PC-3 (cell line): ENCODE measurements at regions of chr6 and their contacts with region 1.

Region 1: DNA sequence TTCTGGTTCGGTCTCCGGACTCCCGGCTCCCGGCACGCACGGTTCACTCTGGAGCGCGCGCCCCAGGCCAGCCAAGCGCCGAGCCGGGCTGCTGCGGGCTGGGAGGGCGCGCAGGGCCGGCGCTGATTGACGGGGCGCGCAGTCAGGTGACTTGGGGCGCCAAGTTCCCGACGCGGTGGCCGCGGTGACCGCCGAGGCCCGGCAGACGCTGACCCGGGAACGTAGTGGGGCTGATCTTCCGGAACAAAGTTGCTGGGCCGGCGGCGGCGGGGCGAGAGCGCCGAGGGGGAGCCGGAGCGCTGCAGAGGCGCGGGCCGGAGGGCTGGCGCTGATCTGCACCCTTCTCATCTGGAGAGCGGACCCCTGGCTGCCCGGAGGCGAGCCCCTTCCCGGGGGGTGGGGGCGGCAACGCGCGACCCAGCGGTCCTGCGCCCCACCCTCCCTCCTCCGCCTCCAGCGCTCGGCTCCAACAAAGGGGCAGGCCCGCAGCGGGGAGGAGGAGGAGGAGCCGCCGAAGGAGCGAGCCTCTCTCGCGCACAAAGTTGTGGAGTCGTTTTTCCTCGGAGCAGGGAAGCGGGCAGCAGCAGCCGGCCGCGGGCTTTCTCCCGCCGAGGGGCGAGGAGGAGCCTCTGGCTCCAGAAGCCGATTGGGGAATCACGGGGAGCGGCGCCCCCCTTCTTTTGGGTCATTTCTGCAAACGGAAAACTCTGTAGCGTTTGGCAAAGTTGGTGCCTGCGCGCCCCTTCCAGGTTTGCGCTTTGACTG is at the start of gene UTRN:
- DNase-seq: peak; percentile 69
- ATAC-seq: peak; percentile 50
- H3K4me3 ChIP-seq: peak within 1 kb of the TSS; percentile 92
- H3K27ac ChIP-seq: peak within 1 kb of the TSS; percentile 94
- H3K4me1 ChIP-seq: peaks cover 14% of the 10 kb centered on the region
- H3K27me3 ChIP-seq: no peaks in the 10 kb centered on the region
- CTCF ChIP-seq: no peak
- total RNA-seq, gene UTRN: 49.0 and 58.3 TPM in 2 replicates

Region 2: GRCh38 chr6:144104898-144105487 is 180.0 kb before region 1 on chr6:
- CTCF ChIA-PET with region 1: interaction called, 17 read pairs
- POLR2A ChIA-PET with region 1: no interaction called
- intact Hi-C with region 1: loop called (anchors 5 kb)
- DNase-seq: peak; percentile 81
- ATAC-seq: peak; percentile 79
- H3K4me3 ChIP-seq: no peak overlapping the region
- H3K27ac ChIP-seq: no peak overlapping the region
- H3K4me1 ChIP-seq: no peaks in the 10 kb centered on the region
- H3K27me3 ChIP-seq: no peaks in the 10 kb centered on the region
- CTCF ChIP-seq: peak; percentile 80

Region 3: GRCh38 chr6:144265390-144265789 is 19.6 kb before region 1 on chr6:
- CTCF ChIA-PET with region 1: interaction called, 3 read pairs
- POLR2A ChIA-PET with region 1: interaction called, 4 read pairs
- intact Hi-C with region 1: loop called (anchors 1 kb)
- DNase-seq: peak; percentile 82
- ATAC-seq: peak; percentile 35
- H3K4me3 ChIP-seq: peak overlapping the region; percentile 47
- H3K27ac ChIP-seq: peak overlapping the region; percentile 85
- H3K4me1 ChIP-seq: peaks cover 35% of the 10 kb centered on the region
- H3K27me3 ChIP-seq: no peaks in the 10 kb centered on the region
- CTCF ChIP-seq: no peak

Region 4: GRCh38 chr6:144411332-144412190 is 126.6 kb after region 1 on chr6:
- CTCF ChIA-PET with region 1: no interaction called
- POLR2A ChIA-PET with region 1: no interaction called
- intact Hi-C with region 1: loop called (anchors 2 kb)
- DNase-seq: peak; percentile 56
- ATAC-seq: peak; percentile 39
- H3K4me3 ChIP-seq: peak overlapping the region; percentile 66
- H3K27ac ChIP-seq: peak overlapping the region; percentile 85
- H3K4me1 ChIP-seq: peaks cover 46% of the 10 kb centered on the region
- H3K27me3 ChIP-seq: no peaks in the 10 kb centered on the region
- CTCF ChIP-seq: no peak

Region 5: GRCh38 chr6:144447472-144447871 is 162.5 kb after region 1 on chr6:
- CTCF ChIA-PET with region 1: no interaction called
- POLR2A ChIA-PET with region 1: interaction called, 5 read pairs
- intact Hi-C with region 1: loop called (anchors 2 kb)
- DNase-seq: peak; percentile 88
- ATAC-seq: peak; percentile 92
- H3K4me3 ChIP-seq: no peak overlapping the region
- H3K27ac ChIP-seq: peak overlapping the region; percentile 69
- H3K4me1 ChIP-seq: peaks cover 31% of the 10 kb centered on the region
- H3K27me3 ChIP-seq: no peaks in the 10 kb centered on the region
- CTCF ChIP-seq: no peak